ENCODE measurements at regions of chr4 and their contacts with region 1.

Region 1: GRCh38 chr4:164440199-164440598 is 313.7 kb upstream of the SMIM31 start:
- ATAC-seq: peak in 5 of 8 experiments; percentile 13 to 53 (median 32)
- H3K4me3 ChIP-seq: no peak overlapping the region
- H3K27ac ChIP-seq: no peak overlapping the region
- H3K4me1 ChIP-seq: peaks cover 4 to 11% of the 10 kb centered on the region in 2 donors

Region 2: DNA sequence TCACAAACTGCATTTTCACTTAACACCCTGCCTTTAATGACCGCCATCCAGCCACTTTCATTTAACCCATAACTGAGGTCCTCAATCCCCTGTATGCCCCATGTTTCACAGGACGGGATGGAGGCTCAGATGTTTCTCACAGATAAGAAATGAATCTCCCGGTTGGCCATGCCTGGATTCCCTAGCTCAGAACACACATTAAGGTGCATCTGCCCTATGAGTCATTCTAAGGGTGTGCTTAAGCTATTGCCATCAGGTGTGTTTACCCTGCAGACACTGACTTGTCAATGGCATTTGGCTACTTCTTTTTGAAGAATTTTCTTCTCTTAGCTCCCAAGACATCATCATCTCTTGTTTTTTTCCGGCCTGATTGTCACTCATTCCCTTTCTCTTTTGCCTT is 91.1 kb after region 1 on chr4:
- in situ Hi-C with region 1: no loop called
- ATAC-seq: no peak
- H3K4me3 ChIP-seq: no peak overlapping the region
- H3K27ac ChIP-seq: no peak overlapping the region
- H3K4me1 ChIP-seq: peaks cover 20 to 23% of the 10 kb centered on the region in 2 donors

Region 3: GRCh38 chr4:164550989-164551712 is 111.0 kb after region 1 on chr4:
- in situ Hi-C with region 1: no loop called
- ATAC-seq: no peak
- H3K4me3 ChIP-seq: no peak overlapping the region
- H3K27ac ChIP-seq: no peak overlapping the region
- H3K4me1 ChIP-seq: no peaks in the 10 kb centered on the region

Region 4: GRCh38 chr4:164683040-164683439 is 242.8 kb after region 1 on chr4:
- in situ Hi-C with region 1: loop called in 1 of 9 experiments (anchors 25 kb)
- ATAC-seq: no peak
- H3K4me3 ChIP-seq: no peak overlapping the region
- H3K27ac ChIP-seq: no peak overlapping the region
- H3K4me1 ChIP-seq: no peaks in the 10 kb centered on the region